Activated CD4-positive, alpha-beta T cell treated with anti-CD3 and anti-CD28 coated beads, Interleukin-2, amount 10 ng/mL, durations not matched to agents 24 days and 14 days (primary cell): ENCODE measurements at regions of chr10 and their contacts with region 1.

Region 1: GRCh38 chr10:91163269-91163868 is 57.1 kb upstream of the PCGF5 start:
- DNase-seq: peak; percentile 92
- H3K4me3 Mint-ChIP-seq: peak overlapping the region; percentile 89
- H3K27ac Mint-ChIP-seq: peak overlapping the region; percentile 92
- H3K4me1 Mint-ChIP-seq: peaks cover 33% of the 10 kb centered on the region
- H3K27me3 Mint-ChIP-seq: peaks cover 6% of the 10 kb centered on the region

Region 2: DNA sequence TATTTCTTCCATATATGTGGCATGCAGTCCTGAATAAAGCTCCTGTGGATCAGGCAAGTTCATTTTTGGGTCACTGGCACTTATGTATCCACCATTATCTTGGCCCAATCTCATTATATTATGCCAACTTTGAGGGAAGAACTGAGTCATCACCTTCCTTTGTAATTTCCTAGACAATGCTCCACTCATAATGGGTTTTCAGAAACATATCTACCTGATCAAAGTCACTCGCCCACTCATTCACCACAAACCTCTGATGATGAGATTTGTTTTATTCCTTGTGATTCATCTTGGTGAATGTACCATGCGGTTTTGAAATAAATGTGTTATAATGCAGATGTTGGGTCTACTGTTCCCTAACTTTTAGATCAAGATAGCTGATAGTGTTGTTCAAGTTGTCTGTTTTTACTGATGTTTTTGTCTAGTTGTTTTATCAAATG is 936.1 kb before region 1 on chr10:
- intact Hi-C with region 1: loop called (anchors 5 kb)
- DNase-seq: peak; percentile 66
- H3K4me3 Mint-ChIP-seq: no peak overlapping the region
- H3K27ac Mint-ChIP-seq: peak overlapping the region; percentile 46
- H3K4me1 Mint-ChIP-seq: peaks cover 8% of the 10 kb centered on the region
- H3K27me3 Mint-ChIP-seq: peaks cover 5% of the 10 kb centered on the region

Region 3: GRCh38 chr10:90912174-90912573 is 251.2 kb before region 1 on chr10:
- intact Hi-C with region 1: loop called (anchors 10 kb)
- DNase-seq: no peak
- H3K4me3 Mint-ChIP-seq: no peak overlapping the region
- H3K27ac Mint-ChIP-seq: no peak overlapping the region
- H3K4me1 Mint-ChIP-seq: peaks cover 2% of the 10 kb centered on the region
- H3K27me3 Mint-ChIP-seq: peaks cover 7% of the 10 kb centered on the region

Region 4: DNA sequence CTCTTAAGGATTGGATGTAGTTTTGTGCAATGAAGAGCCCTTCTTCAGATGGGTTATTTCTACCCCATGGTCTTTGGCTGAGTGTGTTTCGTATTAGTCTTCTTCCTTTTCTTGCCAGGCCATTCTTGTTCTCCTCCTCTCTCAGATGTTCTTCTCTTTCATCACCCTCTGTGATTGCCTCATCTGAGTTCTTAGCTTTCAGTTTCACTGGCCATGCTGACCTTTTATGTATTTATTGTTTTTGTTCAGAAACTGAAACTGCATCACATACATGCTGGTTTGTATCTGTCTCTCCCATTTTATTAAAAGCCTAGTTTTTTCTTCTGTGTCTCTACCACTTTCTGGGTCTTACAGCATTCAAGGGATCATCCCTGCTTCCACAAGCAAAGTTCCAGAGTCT is 35.4 kb after region 1 on chr10:
- intact Hi-C with region 1: loop called (anchors 1 kb)
- DNase-seq: peak; percentile 84
- H3K4me3 Mint-ChIP-seq: peak overlapping the region; percentile 67
- H3K27ac Mint-ChIP-seq: peak overlapping the region; percentile 78
- H3K4me1 Mint-ChIP-seq: peaks cover 68% of the 10 kb centered on the region
- H3K27me3 Mint-ChIP-seq: no peaks in the 10 kb centered on the region

Region 5: DNA sequence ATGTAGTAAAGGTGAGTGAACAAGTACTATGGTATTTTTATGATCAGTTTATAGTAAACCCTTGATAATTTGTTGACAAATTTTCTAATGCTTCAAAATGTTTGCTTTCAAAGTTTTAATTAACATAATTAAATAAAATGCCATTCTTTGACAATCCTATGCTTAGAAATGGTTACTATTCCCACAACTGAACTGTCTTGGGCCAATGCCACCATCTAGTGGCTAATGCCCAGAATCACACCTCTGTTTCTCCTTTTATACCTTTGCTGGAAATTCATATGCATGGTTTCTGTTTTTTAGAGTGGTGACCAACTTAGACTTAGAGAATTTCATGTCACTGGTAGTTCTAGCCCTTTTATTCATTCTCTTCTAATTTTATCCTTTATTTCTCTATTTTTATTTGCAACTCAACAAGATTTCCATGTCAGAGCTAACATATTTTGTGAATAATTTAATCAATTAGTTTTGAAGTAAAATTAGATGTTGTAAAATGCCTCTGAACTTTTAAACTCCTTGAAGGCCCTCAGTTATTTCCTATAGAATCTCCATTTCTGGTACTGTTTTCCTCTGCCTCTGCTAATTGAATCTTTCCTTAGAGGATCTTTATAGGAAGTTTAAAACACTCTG is 88.2 kb after region 1 on chr10:
- intact Hi-C with region 1: loop called (anchors 2 kb)
- DNase-seq: peak; percentile 85
- H3K4me3 Mint-ChIP-seq: no peak overlapping the region
- H3K27ac Mint-ChIP-seq: no peak overlapping the region
- H3K4me1 Mint-ChIP-seq: peaks cover 3% of the 10 kb centered on the region
- H3K27me3 Mint-ChIP-seq: no peaks in the 10 kb centered on the region

Region 6: GRCh38 chr10:91479583-91479982 is 316.2 kb after region 1 on chr10:
- intact Hi-C with region 1: no loop called
- DNase-seq: no peak
- H3K4me3 Mint-ChIP-seq: no peak overlapping the region
- H3K27ac Mint-ChIP-seq: no peak overlapping the region
- H3K4me1 Mint-ChIP-seq: no peaks in the 10 kb centered on the region
- H3K27me3 Mint-ChIP-seq: no peaks in the 10 kb centered on the region

Region 7: DNA sequence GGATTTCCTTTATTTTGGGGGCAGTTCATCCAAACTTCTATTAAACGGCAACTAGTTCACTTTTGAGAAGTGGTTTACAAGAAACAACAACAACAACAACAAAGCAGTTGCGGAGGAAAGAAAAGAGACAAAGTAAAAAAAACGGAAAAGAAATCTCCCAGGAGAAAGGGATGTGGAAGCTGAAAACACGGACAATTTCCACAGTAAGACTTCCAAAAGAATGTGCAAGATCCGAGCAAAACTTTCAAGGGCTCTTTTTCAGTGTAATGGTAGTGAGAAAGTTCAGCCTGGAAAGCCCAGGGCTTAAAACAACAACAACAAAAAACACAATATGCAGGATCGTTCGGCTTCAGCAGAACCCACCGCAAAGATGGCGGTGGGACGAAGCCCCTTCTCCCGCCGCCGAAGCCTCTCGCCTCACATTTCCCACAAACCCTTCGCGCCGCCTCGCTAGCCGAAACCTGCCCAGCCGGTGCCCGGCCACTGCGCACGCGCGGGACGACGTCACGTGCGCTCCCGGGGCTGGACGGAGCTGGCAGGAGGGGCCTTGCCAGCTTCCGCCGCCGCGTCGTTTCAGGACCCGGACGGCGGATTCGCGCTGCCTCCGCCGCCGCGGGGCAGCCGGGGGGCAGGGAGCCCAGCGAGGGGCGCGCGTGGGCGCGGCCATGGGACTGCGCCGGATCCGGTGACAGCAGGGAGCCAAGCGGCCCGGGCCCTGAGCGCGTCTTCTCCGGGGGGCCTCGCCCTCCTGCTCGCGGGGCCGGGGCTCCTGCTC is 634.7 kb after region 1 on chr10 and contains the start of gene TNKS2:
- intact Hi-C with region 1: no loop called
- DNase-seq: peak; percentile 99
- H3K4me3 Mint-ChIP-seq: peak within 1 kb of the TSS; percentile 96
- H3K27ac Mint-ChIP-seq: peak within 1 kb of the TSS; percentile 98
- H3K4me1 Mint-ChIP-seq: peaks cover 51% of the 10 kb centered on the region
- H3K27me3 Mint-ChIP-seq: no peaks in the 10 kb centered on the region
- total RNA-seq, gene TNKS2: 27.5 and 28.8 TPM in 2 replicates